H1 (cell line): ENCODE measurements at regions of chr12 and their contacts with region 1.

Region 1: GRCh38 chr12:57476162-57476992 is 3.3 kb downstream of the ARHGAP9 start:
- DNase-seq: peak in 1 of 2 experiments; percentile 79
- H3K4me3 ChIP-seq: peak overlapping the region; percentile 22 to 59 (median 50)
- H3K27ac ChIP-seq: no peak overlapping the region
- H3K4me1 ChIP-seq: peaks cover 0 to 25% (median 11%) of the 10 kb centered on the region in 4 experiments; a peak in 6 of 7 replicates
- H3K27me3 ChIP-seq: peaks cover 20 to 49% (median 42%) of the 10 kb centered on the region in 4 experiments
- CTCF ChIP-seq: peak; percentile 67 to 84 (median 69)
- EP300 ChIP-seq: no peak
- POLR2A ChIP-seq: no peak
- RAD21 ChIP-seq: peak in 1 of 2 experiments; percentile 6; a peak in 1 of 4 replicates

Region 2: DNA sequence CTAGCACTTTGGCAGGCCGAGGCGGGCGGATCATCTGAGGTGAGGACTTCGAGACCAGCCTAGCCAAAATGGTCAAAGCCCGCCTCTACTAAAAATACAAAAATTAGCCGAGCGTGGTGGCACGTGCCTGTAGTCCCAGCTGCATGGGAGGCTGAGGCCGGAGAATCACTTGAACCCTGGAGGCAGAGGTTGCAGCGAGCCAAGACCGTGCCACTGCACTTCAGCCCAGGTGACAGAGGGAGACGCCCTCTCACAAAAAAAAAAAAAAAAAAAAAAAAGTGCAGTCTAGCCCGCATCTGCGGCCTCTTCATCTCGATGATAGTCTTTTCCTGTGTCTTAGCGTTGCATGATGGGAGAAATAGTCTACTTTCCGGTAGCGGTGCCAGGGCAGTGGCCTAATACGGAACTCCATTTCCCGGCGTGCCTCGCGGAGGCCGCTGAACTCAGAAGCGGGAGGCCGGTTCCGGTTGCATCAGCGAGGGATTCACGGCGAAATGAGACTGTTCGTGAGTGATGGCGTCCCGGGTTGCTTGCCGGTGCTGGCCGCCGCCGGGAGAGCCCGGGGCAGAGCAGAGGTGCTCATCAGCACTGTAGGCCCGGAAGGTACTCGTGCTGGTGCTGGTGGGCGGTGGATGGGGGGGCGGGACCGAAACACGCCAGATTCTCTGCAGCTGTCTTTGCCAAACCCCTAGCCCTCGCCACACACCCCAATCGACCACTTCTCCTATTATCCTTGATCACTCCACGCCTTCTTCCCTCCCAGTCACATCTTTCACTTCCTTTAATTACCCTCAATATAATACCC is 11.4 kb after region 1 on chr12 and contains the start of gene MARS1:
- CTCF ChIA-PET with region 1: interaction called, 34 read pairs
- POLR2A ChIA-PET with region 1: no interaction called
- DNase-seq: peak; percentile 85 to 88
- H3K4me3 ChIP-seq: peak within 1 kb of the TSS; percentile 77 to 99 (median 94)
- H3K27ac ChIP-seq: peak within 1 kb of the TSS; percentile 93
- H3K4me1 ChIP-seq: peaks cover 0 to 7% (median 2%) of the 10 kb centered on the region in 4 experiments; a peak in 5 of 7 replicates
- H3K27me3 ChIP-seq: no peaks in the 10 kb centered on the region
- CTCF ChIP-seq: peak; percentile 40 to 61 (median 41)
- EP300 ChIP-seq: no peak
- POLR2A ChIP-seq: peak; percentile 77 to 97
- RAD21 ChIP-seq: no peak; a peak in 1 of 4 replicates
- total RNA-seq, gene MARS1: 398 and 407 TPM in 2 replicates

Region 3: GRCh38 chr12:57590536-57591479 is 114.4 kb after region 1 on chr12 and contains the start of gene PIP4K2C:
- CTCF ChIA-PET with region 1: no interaction called
- POLR2A ChIA-PET with region 1: no interaction called
- DNase-seq: peak; percentile 81 to 90
- H3K4me3 ChIP-seq: peak within 1 kb of the TSS; percentile 72 to 95 (median 80)
- H3K27ac ChIP-seq: peak within 1 kb of the TSS; percentile 26; the same call in 1 of the 2 replicates
- H3K4me1 ChIP-seq: peaks cover 2 to 7% (median 3%) of the 10 kb centered on the region in 4 experiments; a peak in 6 of 7 replicates
- H3K27me3 ChIP-seq: no peaks in the 10 kb centered on the region
- CTCF ChIP-seq: no peak; a peak in 1 of 4 replicates
- EP300 ChIP-seq: no peak
- POLR2A ChIP-seq: peak; percentile 42 to 67
- RAD21 ChIP-seq: no peak; a peak in 1 of 4 replicates
- total RNA-seq, gene PIP4K2C: 21.4 and 27.1 TPM in 2 replicates

Region 4: DNA sequence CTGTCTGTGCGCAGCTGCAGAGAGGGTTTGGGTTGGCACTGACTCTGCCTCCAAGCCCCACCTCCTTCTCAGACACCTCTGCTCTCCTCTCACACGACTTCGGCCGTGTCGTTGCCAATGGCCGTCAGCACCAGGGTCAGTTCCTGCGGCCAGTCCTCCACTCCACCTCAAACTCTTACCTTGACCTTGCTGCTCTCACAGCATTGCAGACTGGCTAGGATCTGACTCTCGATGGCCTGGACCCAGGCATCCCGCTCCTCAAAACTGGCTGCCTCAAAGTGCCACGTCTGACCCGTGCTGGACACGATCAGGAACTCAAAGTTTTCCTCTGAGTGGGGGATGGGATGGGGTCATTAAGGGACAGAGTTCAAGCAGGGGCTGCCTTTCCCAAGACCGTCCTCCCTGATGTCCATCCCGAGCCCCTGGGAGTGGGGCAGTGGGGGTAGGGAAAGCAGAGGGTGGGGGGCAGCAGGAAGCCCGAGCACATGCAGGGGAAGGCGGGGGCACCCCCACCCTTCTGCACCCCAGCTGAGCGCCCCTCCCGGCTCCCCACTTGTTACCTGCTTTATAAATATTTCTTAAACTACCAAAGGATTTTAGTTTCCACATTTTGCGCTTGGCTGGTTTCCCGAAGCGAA is 251.5 kb after region 1 on chr12:
- CTCF ChIA-PET with region 1: no interaction called
- POLR2A ChIA-PET with region 1: no interaction called
- DNase-seq: no peak
- H3K4me3 ChIP-seq: peak overlapping the region in 1 of 4 experiments; percentile 82; a peak in 2 of 8 replicates
- H3K27ac ChIP-seq: no peak overlapping the region
- H3K4me1 ChIP-seq: peaks cover 0 to 20% (median 13%) of the 10 kb centered on the region in 4 experiments; a peak in 5 of 7 replicates
- H3K27me3 ChIP-seq: peaks cover 19 to 85% (median 61%) of the 10 kb centered on the region in 4 experiments
- CTCF ChIP-seq: no peak
- EP300 ChIP-seq: no peak
- POLR2A ChIP-seq: no peak
- RAD21 ChIP-seq: no peak

Region 5: DNA sequence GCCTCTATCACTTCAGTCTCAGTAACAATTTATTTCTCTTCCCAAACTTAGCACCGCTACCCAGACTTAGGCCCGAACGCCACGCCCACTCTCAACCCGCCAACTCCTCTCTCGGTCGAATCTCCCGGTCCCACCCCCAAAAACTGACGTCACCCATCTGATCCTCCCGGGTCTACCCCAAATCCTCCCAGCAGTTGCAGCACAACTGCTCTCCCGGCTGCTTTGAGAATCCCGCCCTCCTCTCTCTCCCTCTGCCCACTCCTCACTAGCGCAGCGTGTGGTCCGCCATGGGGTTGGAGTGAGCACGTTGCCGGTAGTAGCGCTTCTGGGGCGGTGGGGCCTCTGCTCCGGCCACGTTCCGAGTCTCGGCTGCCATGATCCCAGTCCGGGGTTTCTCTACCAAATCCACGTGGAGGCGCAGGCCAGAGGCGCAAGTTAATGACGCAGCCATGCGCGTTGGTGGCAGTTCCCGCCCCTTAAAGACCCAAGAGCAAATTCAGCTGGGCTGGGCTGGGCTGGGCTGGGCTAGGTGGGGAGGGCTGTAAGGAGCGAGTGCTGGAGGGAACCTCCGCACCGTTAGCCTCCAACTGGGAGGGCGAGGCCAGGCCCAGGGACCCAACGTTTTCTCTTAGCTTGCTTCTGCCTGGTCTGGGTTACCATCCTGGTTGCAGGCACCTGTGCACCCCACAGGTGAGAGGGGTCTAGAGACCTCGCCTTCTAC is 295.5 kb after region 1 on chr12 and contains the start of gene METTL1:
- CTCF ChIA-PET with region 1: no interaction called
- POLR2A ChIA-PET with region 1: no interaction called
- DNase-seq: peak; percentile 91 to 96
- H3K4me3 ChIP-seq: peak within 1 kb of the TSS; percentile 79 to 99 (median 95)
- H3K27ac ChIP-seq: peak within 1 kb of the TSS; percentile 99
- H3K4me1 ChIP-seq: peaks cover 3 to 10% (median 5%) of the 10 kb centered on the region in 4 experiments; a peak in 5 of 7 replicates
- H3K27me3 ChIP-seq: peaks cover 0 to 7% (median 3%) of the 10 kb centered on the region in 4 experiments; a peak in 4 of 7 replicates
- CTCF ChIP-seq: peak in 1 of 3 experiments; percentile 1; a peak in 1 of 4 replicates
- EP300 ChIP-seq: 0 out of 3 replicates have a peak, but pooled peaks of 1 of the 2 experiments have one; percentile 66
- POLR2A ChIP-seq: peak in 1 of 2 experiments; percentile 98; a peak in 2 of 3 replicates
- RAD21 ChIP-seq: no peak
- total RNA-seq, gene METTL1: 41.9 and 46.0 TPM in 2 replicates

Region 6: GRCh38 chr12:57887631-57888408 is 411.4 kb after region 1 on chr12:
- CTCF ChIA-PET with region 1: no interaction called
- POLR2A ChIA-PET with region 1: no interaction called
- DNase-seq: no peak
- H3K4me3 ChIP-seq: peak overlapping the region in 2 of 4 experiments; percentile 4 to 23; a peak in 3 of 8 replicates
- H3K27ac ChIP-seq: no peak overlapping the region
- H3K4me1 ChIP-seq: peaks cover 2 to 18% (median 14%) of the 10 kb centered on the region in 4 experiments
- H3K27me3 ChIP-seq: no peaks in the 10 kb centered on the region; a peak in 1 of 7 replicates
- CTCF ChIP-seq: no peak
- EP300 ChIP-seq: no peak
- POLR2A ChIP-seq: no peak
- RAD21 ChIP-seq: no peak